ENCODE measurements at regions of chr12 and their contacts with region 1.

Region 1: DNA sequence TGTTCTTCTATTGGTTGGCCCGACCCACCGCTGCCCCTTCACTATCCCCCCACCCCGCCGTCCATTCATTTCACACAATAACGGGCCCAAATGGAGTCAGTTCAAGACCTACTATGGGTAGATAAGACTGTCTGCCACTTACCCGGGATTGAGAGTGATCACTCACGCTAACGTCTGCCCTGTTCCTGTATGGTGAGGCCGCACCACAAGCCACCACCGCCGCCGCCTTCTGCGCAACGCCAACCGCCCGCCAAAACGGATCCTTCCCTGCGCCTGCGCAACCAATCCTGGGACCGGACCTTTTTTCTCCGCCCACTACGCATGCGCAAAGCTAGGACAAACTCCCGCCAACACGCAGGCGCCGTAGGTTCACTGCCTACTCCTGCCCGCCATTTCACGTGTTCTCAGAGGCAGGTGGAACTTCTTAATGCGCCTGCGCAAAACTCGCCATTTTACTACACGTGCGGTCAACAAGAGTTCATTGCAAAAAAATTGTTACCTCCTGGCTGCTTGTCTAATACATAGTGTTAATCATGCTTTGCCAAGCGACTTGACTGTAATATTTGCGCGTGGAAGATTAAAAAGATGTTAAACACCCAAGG is at the start of gene CBX5:
- DNase-seq: peak; percentile 88 to 97 (median 94)
- H3K4me3 ChIP-seq: peak within 1 kb of the TSS; percentile 59 to 99 (median 85)
- H3K27ac ChIP-seq: peak within 1 kb of the TSS; percentile 86 to 100 (median 98)
- H3K27me3 ChIP-seq: no peaks in the 10 kb centered on the region
- CTCF ChIP-seq: peak in 5 of 56 donors; percentile 2 to 7 (median 5)
- total RNA-seq, gene CBX5: 82.3 to 164 (median 125) TPM

Region 2: GRCh38 chr12:54214553-54215406 is 65.2 kb before region 1 on chr12:
- intact Hi-C with region 1: loop called (anchors 5 to 10 kb)
- DNase-seq: peak; percentile 67 to 90 (median 83)
- H3K4me3 ChIP-seq: peak overlapping the region in 48 of 59 donors; percentile 5 to 57 (median 40)
- H3K27ac ChIP-seq: peak overlapping the region in 3 of 59 donors; percentile 10 to 68 (median 27)
- H3K27me3 ChIP-seq: peaks cover 0 to 20% (median 0%) of the 10 kb centered on the region in 45 donors
- CTCF ChIP-seq: peak; percentile 66 to 100 (median 99)

Region 3: DNA sequence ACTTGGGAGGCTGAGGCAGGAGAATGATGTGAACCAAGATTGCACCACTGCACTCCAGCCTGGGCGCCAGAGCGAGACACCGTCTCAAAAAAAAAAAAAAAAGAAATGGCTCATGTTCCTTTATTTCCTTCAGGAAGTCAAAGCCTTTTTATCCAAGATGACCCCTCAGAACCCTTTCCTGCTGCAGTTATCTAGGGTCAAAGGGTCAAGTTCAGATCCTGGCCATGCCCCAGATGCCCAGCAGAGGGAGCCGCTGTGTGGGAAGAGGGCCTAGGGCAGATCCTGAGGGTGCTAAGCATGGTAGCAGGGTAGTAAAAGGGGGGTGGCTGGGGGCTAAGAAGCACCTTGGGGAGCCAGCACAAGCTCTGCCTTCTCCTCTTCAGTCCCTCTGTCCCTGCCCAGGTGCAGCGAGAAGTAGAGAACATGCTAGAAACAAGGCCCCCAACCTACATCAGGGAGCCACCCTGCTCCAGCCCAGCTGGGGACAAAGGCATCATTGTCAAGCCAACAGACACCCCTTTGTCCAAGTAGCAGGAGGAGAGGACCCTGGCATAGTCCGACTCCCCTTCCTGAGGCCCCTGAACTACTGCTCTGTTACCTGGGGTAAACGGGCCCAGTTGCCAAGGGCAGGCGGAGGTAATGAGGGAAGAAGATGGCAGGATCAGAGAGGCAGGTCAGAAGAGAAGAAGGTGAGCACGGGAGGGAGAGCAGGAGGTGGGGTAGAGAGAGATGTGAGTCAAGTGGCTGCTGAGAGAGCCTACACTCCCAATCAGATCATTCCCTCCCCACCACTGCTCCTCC is 14.4 kb after region 1 on chr12:
- intact Hi-C with region 1: no loop called
- DNase-seq: peak in 7 of 10 donors; percentile 16 to 71 (median 52)
- H3K4me3 ChIP-seq: peak overlapping the region in 5 of 59 donors; percentile 4 to 20 (median 7)
- H3K27ac ChIP-seq: peak overlapping the region in 57 of 59 donors; percentile 16 to 93 (median 76)
- H3K27me3 ChIP-seq: peaks cover 0 to 15% (median 3%) of the 10 kb centered on the region in 45 donors
- CTCF ChIP-seq: peak in 55 of 56 donors; percentile 43 to 86 (median 67)

Region 4: GRCh38 chr12:54324617-54325441 is 44.9 kb after region 1 on chr12 and contains the start of gene COPZ1:
- intact Hi-C with region 1: loop called (anchors 2 kb)
- DNase-seq: peak; percentile 91 to 96 (median 94)
- H3K4me3 ChIP-seq: peak within 1 kb of the TSS; percentile 56 to 99 (median 85)
- H3K27ac ChIP-seq: peak within 1 kb of the TSS; percentile 18 to 95 (median 88)
- H3K27me3 ChIP-seq: no peaks in the 10 kb centered on the region
- CTCF ChIP-seq: peak; percentile 68 to 93 (median 84)
- total RNA-seq, gene COPZ1: 56.8 to 104 (median 78.9) TPM

Region 5: DNA sequence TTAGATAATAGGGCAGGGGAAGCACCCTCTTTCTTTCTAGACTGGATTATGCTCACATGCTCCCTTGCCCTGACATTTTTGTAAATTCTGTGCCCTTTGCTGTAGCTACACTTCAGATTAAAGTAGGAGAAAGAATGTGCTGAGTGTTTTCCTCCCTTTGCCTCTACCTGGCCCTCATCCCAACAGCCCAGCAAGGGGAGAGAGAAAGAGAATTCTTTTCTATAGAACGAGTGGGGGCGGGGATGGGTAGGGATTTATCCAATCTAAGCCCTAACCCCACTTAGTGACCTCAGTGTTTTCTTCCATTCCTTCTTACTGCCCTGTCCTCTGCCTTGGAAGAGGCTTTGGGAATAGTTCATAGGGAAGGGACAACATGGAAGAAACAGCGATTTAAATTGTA is 70.8 kb after region 1 on chr12:
- intact Hi-C with region 1: no loop called
- DNase-seq: no peak
- H3K4me3 ChIP-seq: no peak overlapping the region
- H3K27ac ChIP-seq: peak overlapping the region in 51 of 59 donors; percentile 39 to 99 (median 94)
- H3K27me3 ChIP-seq: no peaks in the 10 kb centered on the region
- CTCF ChIP-seq: no peak

Measured in dorsolateral prefrontal cortex (tissue), 120 donors.